A673 (cell line): ENCODE measurements at regions of chr9 and their contacts with region 1.

Region 1: GRCh38 chr9:132441404-132441803 is 31.4 kb downstream of the CFAP77 start:
- DNase-seq: no peak
- H3K4me3 ChIP-seq: no peak overlapping the region
- H3K27ac ChIP-seq: no peak overlapping the region
- H3K4me1 ChIP-seq: no peaks in the 10 kb centered on the region
- H3K27me3 ChIP-seq: peaks cover 46% of the 10 kb centered on the region
- CTCF ChIP-seq: no peak

Region 2: GRCh38 chr9:132461971-132462370 is 20.6 kb after region 1 on chr9:
- CTCF ChIA-PET with region 1: no interaction called
- POLR2A ChIA-PET with region 1: no interaction called
- intact Hi-C with region 1: loop called (anchors 1 kb)
- DNase-seq: no peak
- H3K4me3 ChIP-seq: no peak overlapping the region
- H3K27ac ChIP-seq: no peak overlapping the region
- H3K4me1 ChIP-seq: no peaks in the 10 kb centered on the region
- H3K27me3 ChIP-seq: no peaks in the 10 kb centered on the region
- CTCF ChIP-seq: no peak